ENCODE measurements at regions of chr3 and their contacts with region 1.

Region 1: DNA sequence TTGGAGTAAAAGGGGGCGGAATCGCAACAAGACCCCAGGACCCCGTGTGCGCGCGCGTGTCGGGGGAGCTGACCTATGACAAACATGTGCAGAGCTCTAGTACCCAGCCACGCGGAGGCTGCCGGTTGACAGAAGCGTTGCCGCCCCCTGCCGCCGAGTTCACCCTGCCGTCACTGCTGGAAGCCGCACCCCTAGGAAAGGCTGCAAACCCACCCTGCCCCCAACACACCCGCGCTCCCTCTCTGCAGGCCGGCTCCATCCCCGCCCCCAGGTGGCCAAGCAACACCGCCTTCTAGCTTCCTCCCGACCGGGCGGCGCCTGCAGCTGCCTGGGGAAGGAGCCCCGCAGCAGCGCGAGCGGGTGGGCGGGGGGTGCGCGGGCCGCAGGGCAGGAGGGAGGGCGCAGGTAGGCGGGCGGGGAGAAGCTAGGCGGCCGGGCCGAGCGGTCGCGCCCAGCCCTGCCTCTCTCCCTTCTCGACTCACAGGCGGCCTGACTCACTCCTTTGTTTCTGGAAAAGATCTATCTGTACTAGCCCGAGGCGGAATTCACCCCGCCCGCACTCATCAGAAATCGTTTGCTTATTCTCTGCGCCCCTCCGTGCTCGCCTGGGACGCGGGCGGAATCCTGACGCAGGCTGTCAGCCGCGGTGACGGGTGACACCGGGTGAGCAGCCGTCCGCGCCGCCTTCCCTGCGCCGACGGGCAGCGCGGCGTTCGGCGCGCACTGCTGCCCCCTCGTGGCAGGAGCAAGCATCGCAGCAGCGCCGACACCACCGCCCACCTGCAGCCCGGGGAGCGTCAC is 160.8 kb downstream of the GAP43 start:
- DNase-seq: peak; percentile 91 to 96 (median 93)
- H3K4me3 ChIP-seq: peak overlapping the region in 1 of 2 donors; percentile 81
- H3K4me3 Mint-ChIP-seq: peak overlapping the region; percentile 78 to 96 (median 93)
- H3K27ac ChIP-seq: peak overlapping the region; percentile 90
- H3K27ac Mint-ChIP-seq: peak overlapping the region; percentile 76 to 99 (median 98)
- H3K4me1 ChIP-seq: peaks cover 13% of the 10 kb centered on the region
- H3K4me1 Mint-ChIP-seq: peaks cover 10 to 19% (median 10%) of the 10 kb centered on the region in 4 donors
- H3K27me3 ChIP-seq: no peaks in the 10 kb centered on the region
- H3K27me3 Mint-ChIP-seq: no peaks in the 10 kb centered on the region

Region 2: DNA sequence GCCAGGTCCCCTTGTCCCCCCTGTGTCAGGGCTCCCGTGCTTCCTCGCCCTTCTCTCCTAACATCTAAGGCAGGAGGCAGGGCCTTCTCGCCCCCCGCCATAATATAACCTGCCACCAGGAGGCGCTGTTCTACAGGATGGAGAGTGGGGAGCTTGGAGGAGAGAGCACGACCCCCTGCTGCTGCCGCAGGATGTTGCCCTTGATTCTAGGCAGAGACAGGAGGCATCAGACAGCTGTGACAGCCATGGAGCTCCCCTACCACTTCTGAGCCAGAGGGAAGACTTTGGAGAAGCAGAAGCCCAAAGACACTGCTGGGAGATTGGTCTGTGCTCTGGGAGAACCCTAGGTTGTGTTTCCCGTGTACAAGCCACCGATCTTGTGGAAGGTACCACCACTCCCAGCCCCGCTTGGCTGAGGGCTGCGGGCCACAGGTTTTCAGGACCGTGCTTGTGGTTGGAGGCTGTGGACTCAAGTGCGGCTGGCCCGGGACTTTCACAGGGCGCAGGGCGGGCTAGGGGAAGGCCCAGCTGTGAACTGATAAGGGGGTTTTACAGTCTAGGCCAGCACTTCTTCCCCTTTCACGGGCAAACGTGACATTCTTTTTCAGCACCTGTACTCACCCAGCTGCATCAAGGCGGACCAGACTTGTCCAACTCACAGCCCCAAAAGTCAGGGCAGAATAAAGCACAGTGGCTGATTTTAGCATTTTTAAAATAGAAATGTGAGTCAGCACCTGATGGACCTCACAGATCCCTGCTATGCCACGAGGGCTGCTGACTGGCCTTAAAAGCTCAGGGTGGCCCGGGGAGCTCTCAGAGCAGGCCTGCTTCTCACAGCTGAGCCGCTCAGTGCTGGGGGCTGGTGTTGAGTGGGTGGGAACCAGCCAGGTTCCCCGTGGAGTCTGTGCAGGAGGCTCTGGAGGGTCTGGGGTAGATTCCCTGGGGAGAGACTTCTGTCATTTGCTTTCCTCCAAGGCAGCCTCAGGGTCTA is 1492.9 kb before region 1 on chr3:
- CTCF ChIA-PET with region 1: no interaction called
- POLR2A ChIA-PET with region 1: no interaction called
- intact Hi-C with region 1: loop called (anchors 10 kb)
- DNase-seq: peak; percentile 85 to 93 (median 87)
- H3K4me3 ChIP-seq: peak overlapping the region; percentile 38 to 42
- H3K4me3 Mint-ChIP-seq: peak overlapping the region; percentile 79 to 91 (median 86)
- H3K27ac ChIP-seq: peak overlapping the region; percentile 76
- H3K27ac Mint-ChIP-seq: peak overlapping the region; percentile 90 to 97 (median 95)
- H3K4me1 ChIP-seq: peaks cover 49% of the 10 kb centered on the region
- H3K4me1 Mint-ChIP-seq: peaks cover 27 to 56% (median 43%) of the 10 kb centered on the region in 4 donors
- H3K27me3 ChIP-seq: no peaks in the 10 kb centered on the region
- H3K27me3 Mint-ChIP-seq: no peaks in the 10 kb centered on the region

Region 3: DNA sequence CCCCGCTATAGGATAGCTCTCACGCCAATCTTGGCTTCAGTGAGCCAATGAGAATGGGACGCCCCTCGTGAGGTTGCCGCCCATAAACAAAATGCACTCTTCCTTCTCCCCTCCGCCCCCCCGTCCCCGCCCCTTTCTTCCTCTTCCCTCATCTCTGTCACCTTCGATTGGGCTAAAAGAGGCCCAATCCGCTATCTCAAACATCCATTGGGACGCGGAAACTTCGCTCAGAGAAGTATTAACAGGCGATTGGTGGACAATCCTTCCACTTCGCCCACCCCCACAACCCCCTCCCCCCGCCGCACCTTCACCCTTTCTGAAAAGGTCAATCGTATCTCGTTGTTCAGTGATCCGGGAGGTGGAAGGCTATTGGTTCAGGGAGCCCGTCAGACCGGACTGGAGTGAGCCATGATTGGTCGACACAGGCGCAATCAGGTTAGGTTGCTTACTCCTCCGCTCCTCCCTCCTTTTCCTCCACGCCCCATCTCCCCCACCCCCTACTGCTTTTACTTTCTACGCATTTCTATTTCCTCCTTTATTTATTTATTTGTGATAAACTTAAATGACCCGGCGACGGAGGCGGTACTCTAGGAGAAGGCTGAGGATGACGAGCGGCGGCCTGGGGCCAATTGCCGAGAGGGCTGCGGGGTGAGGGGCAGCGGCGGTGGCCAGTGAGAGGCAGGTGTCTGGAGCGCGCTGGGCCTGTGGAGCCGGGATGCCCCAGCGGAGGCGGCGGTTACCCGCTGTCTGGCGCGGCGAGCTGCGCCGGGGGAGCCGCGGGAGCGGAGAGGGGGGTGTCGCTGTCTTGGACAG is 636.6 kb before region 1 on chr3:
- CTCF ChIA-PET with region 1: no interaction called
- POLR2A ChIA-PET with region 1: interaction called, 13 read pairs
- intact Hi-C with region 1: loop called (anchors 1 kb)
- DNase-seq: peak; percentile 97 to 100 (median 98)
- H3K4me3 ChIP-seq: peak overlapping the region; percentile 43 to 73
- H3K4me3 Mint-ChIP-seq: peak overlapping the region; percentile 93 to 100 (median 98)
- H3K27ac ChIP-seq: peak overlapping the region; percentile 97
- H3K27ac Mint-ChIP-seq: peak overlapping the region; percentile 90 to 100 (median 100)
- H3K4me1 ChIP-seq: peaks cover 25% of the 10 kb centered on the region
- H3K4me1 Mint-ChIP-seq: peaks cover 16 to 48% (median 28%) of the 10 kb centered on the region in 4 donors
- H3K27me3 ChIP-seq: no peaks in the 10 kb centered on the region
- H3K27me3 Mint-ChIP-seq: no peaks in the 10 kb centered on the region

Region 4: GRCh38 chr3:115658337-115659181 is 125.6 kb before region 1 on chr3:
- CTCF ChIA-PET with region 1: interaction called, 9 read pairs
- POLR2A ChIA-PET with region 1: interaction called, 10 read pairs
- intact Hi-C with region 1: loop called (anchors 2 kb)
- DNase-seq: peak; percentile 62 to 76 (median 73)
- H3K4me3 ChIP-seq: peak overlapping the region; percentile 61
- H3K4me3 Mint-ChIP-seq: peak overlapping the region; percentile 91 to 98 (median 95)
- H3K27ac ChIP-seq: peak overlapping the region; percentile 61
- H3K27ac Mint-ChIP-seq: peak overlapping the region; percentile 83 to 100 (median 99)
- H3K4me1 ChIP-seq: peaks cover 28% of the 10 kb centered on the region
- H3K4me1 Mint-ChIP-seq: peaks cover 16 to 32% (median 21%) of the 10 kb centered on the region in 4 donors
- H3K27me3 ChIP-seq: no peaks in the 10 kb centered on the region
- H3K27me3 Mint-ChIP-seq: no peaks in the 10 kb centered on the region

Region 5: DNA sequence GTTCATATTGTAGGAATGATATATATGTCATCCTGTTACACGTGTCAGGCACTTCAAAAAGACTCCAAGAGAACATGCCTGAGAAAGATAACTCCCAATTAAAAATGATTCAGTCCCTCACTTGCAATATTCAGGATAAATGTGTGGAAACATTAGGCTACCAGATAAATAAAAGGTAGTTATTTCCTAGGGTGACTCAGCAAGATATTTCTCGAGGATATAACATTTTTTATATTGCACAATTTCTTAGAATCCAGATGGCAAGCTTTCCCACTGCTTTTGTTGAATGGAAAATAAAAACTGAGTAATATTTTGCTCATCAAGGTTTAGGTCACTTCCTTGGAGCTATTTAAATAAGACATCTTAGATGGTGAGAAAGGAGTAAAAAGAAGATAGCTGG is 20.6 kb after region 1 on chr3:
- CTCF ChIA-PET with region 1: interaction called, 12 read pairs
- POLR2A ChIA-PET with region 1: no interaction called
- intact Hi-C with region 1: no loop called
- DNase-seq: no peak
- H3K4me3 ChIP-seq: no peak overlapping the region
- H3K4me3 Mint-ChIP-seq: no peak overlapping the region
- H3K27ac ChIP-seq: no peak overlapping the region
- H3K27ac Mint-ChIP-seq: no peak overlapping the region
- H3K4me1 ChIP-seq: no peaks in the 10 kb centered on the region
- H3K4me1 Mint-ChIP-seq: no peaks in the 10 kb centered on the region
- H3K27me3 ChIP-seq: peaks cover 7% of the 10 kb centered on the region
- H3K27me3 Mint-ChIP-seq: peaks cover 21 to 26% of the 10 kb centered on the region in 2 donors